Naive thymus-derived CD4-positive, alpha-beta T cell (primary cell): ENCODE measurements at regions of chr4 and their contacts with region 1.

Region 1: GRCh38 chr4:112153211-112153791 is 8.0 kb downstream of the FAM241A start:
- DNase-seq: peak in 1 of 9 donors; percentile 12
- ATAC-seq: no peak
- H3K4me3 ChIP-seq: no peak overlapping the region
- H3K4me3 Mint-ChIP-seq: peak overlapping the region; percentile 13 to 82 (median 62)
- H3K27ac ChIP-seq: no peak overlapping the region
- H3K27ac Mint-ChIP-seq: peak overlapping the region in 6 of 9 donors; percentile 11 to 77 (median 40)
- H3K4me1 ChIP-seq: peaks cover 0 to 15% of the 10 kb centered on the region in 2 donors
- H3K4me1 Mint-ChIP-seq: peaks cover 22 to 53% (median 40%) of the 10 kb centered on the region in 7 donors
- H3K27me3 ChIP-seq: no peaks in the 10 kb centered on the region
- H3K27me3 Mint-ChIP-seq: no peaks in the 10 kb centered on the region

Region 2: GRCh38 chr4:112109186-112110058 is 43.9 kb before region 1 on chr4:
- CTCF ChIA-PET with region 1: no interaction called
- POLR2A ChIA-PET with region 1: no interaction called
- intact Hi-C with region 1: no loop called
- DNase-seq: no peak
- ATAC-seq: peak; percentile 54
- H3K4me3 ChIP-seq: no peak overlapping the region
- H3K4me3 Mint-ChIP-seq: peak overlapping the region in 1 of 10 donors; percentile 67
- H3K27ac ChIP-seq: no peak overlapping the region
- H3K27ac Mint-ChIP-seq: peak overlapping the region in 2 of 9 donors; percentile 28 to 81
- H3K4me1 ChIP-seq: no peaks in the 10 kb centered on the region
- H3K4me1 Mint-ChIP-seq: peaks cover 0 to 13% (median 3%) of the 10 kb centered on the region in 7 donors
- H3K27me3 ChIP-seq: no peaks in the 10 kb centered on the region
- H3K27me3 Mint-ChIP-seq: no peaks in the 10 kb centered on the region

Region 3: DNA sequence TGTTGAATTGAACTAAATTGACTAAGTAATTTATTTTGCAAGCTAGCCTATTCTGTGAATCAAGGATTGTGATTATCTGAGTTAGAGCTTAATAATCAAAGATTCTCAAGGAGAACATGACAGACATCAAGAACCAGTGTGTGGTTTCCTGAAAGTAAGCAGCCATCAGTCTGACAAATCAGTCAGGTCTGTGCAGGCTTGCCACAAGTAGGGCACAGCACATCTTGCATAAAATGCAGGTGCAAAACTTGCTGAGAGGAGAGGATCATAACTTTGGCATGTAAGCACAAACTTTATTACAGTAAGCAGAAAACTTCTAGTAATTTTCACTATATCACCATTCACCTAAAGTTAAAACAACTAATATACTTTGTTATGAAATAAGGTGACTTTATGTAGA is 14.5 kb after region 1 on chr4:
- CTCF ChIA-PET with region 1: no interaction called
- POLR2A ChIA-PET with region 1: no interaction called
- intact Hi-C with region 1: loop called in 1 of 2 experiments (anchors 2 kb)
- DNase-seq: peak in 7 of 9 donors; percentile 18 to 51 (median 30)
- ATAC-seq: peak; percentile 89
- H3K4me3 ChIP-seq: no peak overlapping the region
- H3K4me3 Mint-ChIP-seq: peak overlapping the region in 6 of 10 donors; percentile 1 to 54 (median 16)
- H3K27ac ChIP-seq: peak overlapping the region; percentile 17
- H3K27ac Mint-ChIP-seq: peak overlapping the region in 7 of 9 donors; percentile 4 to 69 (median 42)
- H3K4me1 ChIP-seq: peaks cover 0 to 12% of the 10 kb centered on the region in 2 donors
- H3K4me1 Mint-ChIP-seq: peaks cover 7 to 58% (median 32%) of the 10 kb centered on the region in 7 donors
- H3K27me3 ChIP-seq: no peaks in the 10 kb centered on the region
- H3K27me3 Mint-ChIP-seq: no peaks in the 10 kb centered on the region

Region 4: DNA sequence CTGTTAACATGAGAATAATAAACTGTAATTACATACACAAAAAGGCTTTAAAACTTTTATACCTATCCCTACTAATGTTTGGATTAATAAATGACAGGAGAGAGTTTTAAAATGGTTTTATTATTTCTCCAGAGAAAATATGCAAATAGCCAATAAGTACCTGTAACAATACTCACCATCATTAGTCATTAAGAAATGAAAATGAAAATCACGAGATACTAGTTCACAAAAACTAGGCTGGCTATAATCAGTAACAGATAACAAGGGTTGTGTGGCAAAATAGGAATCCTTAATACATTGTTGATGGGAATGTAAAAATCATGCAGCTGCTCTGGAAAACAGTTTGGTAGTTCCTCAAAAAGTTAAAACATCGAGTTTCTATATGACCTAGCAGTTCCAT is 53.1 kb after region 1 on chr4:
- CTCF ChIA-PET with region 1: no interaction called
- POLR2A ChIA-PET with region 1: no interaction called
- intact Hi-C with region 1: no loop called
- DNase-seq: no peak
- ATAC-seq: no peak
- H3K4me3 ChIP-seq: no peak overlapping the region
- H3K4me3 Mint-ChIP-seq: no peak overlapping the region
- H3K27ac ChIP-seq: no peak overlapping the region
- H3K27ac Mint-ChIP-seq: no peak overlapping the region
- H3K4me1 ChIP-seq: no peaks in the 10 kb centered on the region
- H3K4me1 Mint-ChIP-seq: peaks cover 0 to 2% (median 0%) of the 10 kb centered on the region in 7 donors
- H3K27me3 ChIP-seq: no peaks in the 10 kb centered on the region
- H3K27me3 Mint-ChIP-seq: peaks cover 0 to 7% (median 0%) of the 10 kb centered on the region in 5 donors